ENCODE measurements at regions of chr14 and their contacts with region 1.

Region 1: DNA sequence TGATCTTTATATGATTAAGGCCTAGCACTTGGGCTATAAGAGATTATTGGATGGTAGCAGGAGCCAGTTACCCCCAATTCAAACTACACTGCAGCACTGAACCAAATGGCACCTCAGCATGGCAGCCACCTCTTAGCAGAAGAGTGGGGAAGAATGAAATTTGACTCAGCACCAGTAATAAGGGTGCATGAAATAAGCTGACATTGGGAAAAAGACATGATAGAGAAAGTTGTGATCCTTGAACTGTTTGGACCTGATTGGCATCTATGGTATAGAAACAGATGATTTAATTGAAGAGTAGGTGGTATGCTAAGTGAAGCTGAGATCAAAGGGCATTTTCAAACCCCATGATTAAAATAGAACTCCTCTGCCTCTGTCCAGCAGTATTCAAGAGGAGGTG is 389.5 kb downstream of the FOXG1 start:
- DNase-seq: no peak
- ATAC-seq: no peak
- H3K4me3 ChIP-seq: no peak overlapping the region
- H3K27ac ChIP-seq: no peak overlapping the region
- H3K4me1 ChIP-seq: no peaks in the 10 kb centered on the region
- H3K27me3 ChIP-seq: no peaks in the 10 kb centered on the region
- CTCF ChIP-seq: no peak
- POLR2A ChIP-seq: no peak
- RAD21 ChIP-seq: no peak

Region 2: DNA sequence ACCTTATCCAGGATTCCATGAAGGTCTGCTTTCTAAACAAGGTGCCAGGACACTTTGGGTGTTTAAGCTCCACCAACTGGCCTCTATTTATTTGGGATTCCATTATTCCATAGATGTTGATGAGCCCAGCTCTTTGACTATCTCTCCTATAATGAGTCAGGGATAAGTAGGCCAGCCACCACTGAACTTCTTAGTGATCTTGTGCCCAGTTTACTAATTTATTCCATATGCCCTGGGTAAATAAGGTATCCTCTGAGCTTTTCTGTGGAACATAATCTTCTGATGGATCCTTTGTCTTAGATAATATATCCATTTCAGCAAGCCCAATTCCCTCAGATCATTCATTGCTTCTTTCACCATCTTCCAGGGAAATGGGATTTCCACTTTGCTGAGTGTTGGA is 145.5 kb after region 1 on chr14:
- CTCF ChIA-PET with region 1: no interaction called
- POLR2A ChIA-PET with region 1: no interaction called
- dilution Hi-C with region 1: no loop called
- in situ Hi-C with region 1: no loop called
- intact Hi-C with region 1: no loop called
- DNase-seq: no peak
- ATAC-seq: no peak
- H3K4me3 ChIP-seq: no peak overlapping the region
- H3K27ac ChIP-seq: no peak overlapping the region
- H3K4me1 ChIP-seq: no peaks in the 10 kb centered on the region
- H3K27me3 ChIP-seq: no peaks in the 10 kb centered on the region
- CTCF ChIP-seq: no peak
- POLR2A ChIP-seq: no peak
- RAD21 ChIP-seq: no peak

Region 3: DNA sequence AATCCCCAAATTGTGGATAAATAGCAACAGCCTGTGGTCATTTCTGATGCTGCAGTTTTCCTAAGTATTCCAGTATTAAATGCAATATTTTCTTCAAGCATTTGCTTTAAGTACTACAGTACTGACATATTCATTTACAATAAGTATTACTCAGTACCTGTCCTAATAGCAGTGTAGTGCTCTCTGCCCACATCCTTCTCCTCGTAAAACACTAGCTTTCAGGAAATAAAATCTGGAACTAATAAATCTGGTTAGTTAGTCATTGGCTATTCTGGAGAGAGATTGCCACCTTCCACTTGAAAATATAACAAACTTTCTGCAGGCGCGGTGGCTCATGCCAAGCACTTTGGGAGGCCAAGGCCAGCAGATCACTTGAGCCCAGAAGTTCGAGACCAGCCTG is 330.0 kb after region 1 on chr14:
- CTCF ChIA-PET with region 1: no interaction called
- POLR2A ChIA-PET with region 1: no interaction called
- dilution Hi-C with region 1: no loop called
- in situ Hi-C with region 1: no loop called
- intact Hi-C with region 1: no loop called
- DNase-seq: no peak
- ATAC-seq: no peak
- H3K4me3 ChIP-seq: no peak overlapping the region
- H3K27ac ChIP-seq: no peak overlapping the region
- H3K4me1 ChIP-seq: no peaks in the 10 kb centered on the region
- H3K27me3 ChIP-seq: no peaks in the 10 kb centered on the region
- CTCF ChIP-seq: no peak
- POLR2A ChIP-seq: no peak
- RAD21 ChIP-seq: no peak

Region 4: DNA sequence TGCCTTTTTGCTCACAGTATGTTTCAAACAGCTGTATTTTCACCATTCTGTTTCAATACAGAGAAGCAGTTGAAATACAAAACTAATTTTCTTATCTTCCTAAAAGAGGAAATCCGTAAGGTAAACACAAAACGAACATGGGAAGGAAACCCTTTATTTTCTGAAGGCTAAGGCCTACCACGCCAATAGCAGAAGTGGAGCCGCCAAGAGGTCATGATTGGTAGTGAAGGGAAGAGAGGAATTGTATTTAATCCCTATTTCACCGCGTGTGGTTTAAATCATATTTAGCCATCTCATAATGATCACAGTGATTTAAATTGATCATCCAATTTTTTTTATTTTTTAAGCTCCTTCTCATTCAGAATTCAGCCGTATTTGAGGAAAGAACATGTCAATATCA is 373.3 kb after region 1 on chr14:
- CTCF ChIA-PET with region 1: no interaction called
- POLR2A ChIA-PET with region 1: no interaction called
- dilution Hi-C with region 1: no loop called
- in situ Hi-C with region 1: no loop called
- intact Hi-C with region 1: loop called (anchors 5 kb)
- DNase-seq: peak; percentile 13
- ATAC-seq: peak; percentile 46; the same call in 1 of the 2 replicates
- H3K4me3 ChIP-seq: no peak overlapping the region
- H3K27ac ChIP-seq: no peak overlapping the region
- H3K4me1 ChIP-seq: no peaks in the 10 kb centered on the region
- H3K27me3 ChIP-seq: peaks cover 10% of the 10 kb centered on the region; the same call in 1 of the 2 replicates
- CTCF ChIP-seq: peak; percentile 48
- POLR2A ChIP-seq: no peak
- RAD21 ChIP-seq: peak; percentile 43

Measured in IMR-90 (cell line).